ENCODE measurements at regions of chr13 and their contacts with region 1.

Region 1: GRCh38 chr13:102800145-102801041 is 1.5 kb downstream of the BIVM start:
- DNase-seq: peak in 1 of 2 experiments; percentile 92
- H3K4me3 ChIP-seq: peak overlapping the region; percentile 65 to 87 (median 83)
- H3K27ac ChIP-seq: no peak overlapping the region
- H3K4me1 ChIP-seq: no peaks in the 10 kb centered on the region
- H3K27me3 ChIP-seq: peaks cover 0 to 11% (median 8%) of the 10 kb centered on the region in 4 experiments; a peak in 6 of 7 replicates
- CTCF ChIP-seq: peak; percentile 66 to 79 (median 76)
- EP300 ChIP-seq: no peak
- POLR2A ChIP-seq: no peak
- RAD21 ChIP-seq: peak; percentile 48 to 58; a peak in 3 of 4 replicates

Region 2: DNA sequence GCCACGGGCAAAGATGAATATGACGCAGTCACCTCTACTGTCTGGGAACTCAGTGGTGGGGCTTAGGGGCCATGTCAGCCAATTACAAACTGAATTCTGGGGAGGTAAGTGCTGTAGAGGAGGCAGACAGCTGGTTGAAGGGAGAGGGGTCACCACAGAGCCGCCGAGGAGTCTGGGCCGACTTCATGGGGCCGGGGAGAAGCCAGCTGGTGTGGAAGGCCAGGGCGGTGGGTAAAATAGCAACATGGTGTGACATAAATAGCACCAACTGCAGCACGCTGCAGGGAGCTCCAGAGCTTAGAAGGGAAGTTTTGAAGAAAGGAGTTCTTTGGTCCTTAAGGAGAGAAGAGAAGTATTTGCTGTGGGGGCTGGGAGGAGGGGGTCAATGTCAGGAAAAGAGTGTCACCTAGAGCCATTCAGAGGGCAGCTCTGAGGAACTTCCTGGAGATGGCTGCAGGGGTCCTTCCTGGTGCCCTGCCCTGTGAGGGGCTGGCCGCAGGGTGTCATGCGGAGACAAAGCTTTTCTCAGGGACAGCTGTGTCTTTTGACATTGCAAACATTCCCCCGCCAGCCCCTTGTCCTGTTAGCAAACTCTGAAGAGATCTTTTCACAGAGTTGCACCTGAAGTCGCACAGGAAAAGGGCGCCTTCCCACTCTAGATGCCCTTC is 112.0 kb before region 1 on chr13:
- CTCF ChIA-PET with region 1: interaction called, 14 read pairs
- POLR2A ChIA-PET with region 1: no interaction called
- DNase-seq: no peak
- H3K4me3 ChIP-seq: no peak overlapping the region
- H3K27ac ChIP-seq: peak overlapping the region; percentile 58; the same call in 1 of the 2 replicates
- H3K4me1 ChIP-seq: peaks cover 0 to 11% (median 8%) of the 10 kb centered on the region in 4 experiments
- H3K27me3 ChIP-seq: no peaks in the 10 kb centered on the region
- CTCF ChIP-seq: no peak
- EP300 ChIP-seq: no peak
- POLR2A ChIP-seq: no peak
- RAD21 ChIP-seq: no peak

Region 3: DNA sequence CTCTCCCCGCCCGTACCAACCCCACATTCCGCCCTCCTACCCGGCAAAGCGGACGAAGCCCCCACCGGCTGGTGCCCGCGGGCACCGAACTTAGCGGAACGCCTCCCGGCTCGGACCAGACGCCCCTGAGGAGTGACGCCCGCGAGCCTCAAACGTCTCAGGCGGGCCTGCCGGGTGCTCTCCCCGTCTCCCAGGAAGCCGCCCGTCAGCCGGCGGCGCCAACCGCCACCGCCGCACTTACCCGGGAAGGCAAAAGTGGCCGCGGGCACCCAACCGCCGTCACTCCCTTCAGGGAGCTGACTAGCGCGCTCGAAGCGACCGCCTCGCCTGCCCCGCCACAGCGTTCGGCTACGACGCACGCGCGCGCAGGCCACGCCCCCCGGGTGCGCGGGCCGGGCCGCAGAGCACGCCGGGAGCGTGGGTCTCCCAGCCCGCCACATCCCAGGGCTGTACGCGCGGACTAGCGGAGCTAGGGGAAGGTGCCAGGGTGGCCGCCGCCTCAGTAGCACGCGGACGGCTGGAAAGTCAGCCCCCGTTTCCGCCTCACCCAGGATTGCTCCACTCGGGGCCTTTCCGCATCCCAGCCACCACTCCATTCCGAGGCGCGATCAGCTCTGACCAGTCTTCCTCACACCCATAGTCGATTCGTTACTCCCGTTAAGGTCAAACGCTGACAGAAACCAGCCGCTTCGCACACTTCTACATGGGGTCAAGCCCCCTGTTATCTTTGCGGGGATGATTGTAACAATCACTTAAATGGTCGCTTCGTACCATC is 26.8 kb before region 1 on chr13 and contains the start of gene TEX30:
- CTCF ChIA-PET with region 1: interaction called, 28 read pairs
- POLR2A ChIA-PET with region 1: interaction called, 12 read pairs
- DNase-seq: peak; percentile 36 to 88
- H3K4me3 ChIP-seq: peak within 1 kb of the TSS; percentile 65 to 86 (median 74)
- H3K27ac ChIP-seq: no peak within 1 kb of the TSS
- H3K4me1 ChIP-seq: peaks cover 0 to 6% (median 2%) of the 10 kb centered on the region in 4 experiments; a peak in 2 of 7 replicates
- H3K27me3 ChIP-seq: peaks cover 0 to 18% (median 12%) of the 10 kb centered on the region in 4 experiments; a peak in 5 of 7 replicates
- CTCF ChIP-seq: no peak
- EP300 ChIP-seq: no peak
- POLR2A ChIP-seq: peak; percentile 84 to 90
- RAD21 ChIP-seq: no peak; a peak in 1 of 4 replicates
- total RNA-seq, gene TEX30: 8.5 and 10.3 TPM in 2 replicates

Region 4: DNA sequence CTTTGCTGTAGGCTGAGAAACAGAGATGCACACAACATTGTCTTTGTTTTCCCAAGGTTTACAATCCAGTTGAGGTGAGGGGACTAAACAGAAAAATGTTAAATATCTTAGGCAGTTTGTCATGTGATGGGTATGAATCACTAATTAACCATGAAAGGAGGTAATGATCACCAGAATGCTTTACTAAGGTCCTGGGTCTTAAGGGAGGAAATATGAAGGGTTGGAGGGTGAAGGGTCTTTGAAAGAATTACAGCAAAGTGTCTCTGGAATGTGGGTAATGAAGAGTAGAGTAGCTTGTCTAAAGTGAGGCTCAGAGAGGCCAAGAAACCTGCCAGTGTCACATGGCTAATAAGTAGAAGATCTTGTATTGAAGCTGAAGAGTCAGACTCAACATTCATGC is 17.5 kb after region 1 on chr13:
- CTCF ChIA-PET with region 1: interaction called, 12 read pairs
- POLR2A ChIA-PET with region 1: no interaction called
- DNase-seq: no peak
- H3K4me3 ChIP-seq: no peak overlapping the region
- H3K27ac ChIP-seq: no peak overlapping the region
- H3K4me1 ChIP-seq: no peaks in the 10 kb centered on the region
- H3K27me3 ChIP-seq: no peaks in the 10 kb centered on the region
- CTCF ChIP-seq: no peak
- EP300 ChIP-seq: no peak
- POLR2A ChIP-seq: no peak
- RAD21 ChIP-seq: no peak

Region 5: GRCh38 chr13:102845630-102846260 is 45.4 kb after region 1 on chr13 and contains the start of gene ERCC5:
- CTCF ChIA-PET with region 1: interaction called, 14 read pairs
- POLR2A ChIA-PET with region 1: interaction called, 7 read pairs
- DNase-seq: peak; percentile 75 to 96
- H3K4me3 ChIP-seq: peak within 1 kb of the TSS; percentile 64 to 95 (median 90)
- H3K27ac ChIP-seq: peak within 1 kb of the TSS; percentile 87
- H3K4me1 ChIP-seq: peaks cover 0 to 2% (median 0%) of the 10 kb centered on the region in 4 experiments; a peak in 1 of 7 replicates
- H3K27me3 ChIP-seq: no peaks in the 10 kb centered on the region
- CTCF ChIP-seq: peak in 1 of 3 experiments; percentile 1; a peak in 1 of 4 replicates
- EP300 ChIP-seq: peak in 1 of 2 experiments; percentile 66; a peak in 1 of 3 replicates
- POLR2A ChIP-seq: peak; percentile 75 to 92
- RAD21 ChIP-seq: peak in 1 of 2 experiments; percentile 28; a peak in 2 of 4 replicates
- total RNA-seq, gene ERCC5: 24.4 and 28.3 TPM in 2 replicates